A673 (cell line): ENCODE measurements at regions of chr7 and their contacts with region 1.

Region 1: DNA sequence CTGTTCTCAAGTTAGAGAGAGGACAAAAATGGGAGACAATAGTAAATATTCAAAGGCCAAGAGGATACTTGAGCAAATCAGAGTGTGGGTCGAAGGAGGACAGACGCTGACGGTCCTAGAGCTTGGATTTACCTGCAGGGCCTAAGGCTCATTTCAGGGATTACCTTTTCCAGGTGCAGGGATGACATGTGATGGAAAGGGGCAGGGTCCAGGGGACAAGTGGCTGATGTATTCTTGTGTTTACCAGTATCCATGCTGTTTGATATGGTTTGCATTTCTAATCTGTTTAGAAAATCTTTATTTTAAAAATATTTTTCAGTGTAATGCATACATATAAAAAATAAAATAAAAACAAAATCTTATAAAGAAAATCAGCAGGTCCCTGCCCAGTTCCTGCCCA is 5.3 kb downstream of the GALNTL5 start:
- DNase-seq: no peak
- H3K4me3 ChIP-seq: no peak overlapping the region
- H3K27ac ChIP-seq: no peak overlapping the region
- H3K4me1 ChIP-seq: no peaks in the 10 kb centered on the region
- H3K27me3 ChIP-seq: no peaks in the 10 kb centered on the region
- CTCF ChIP-seq: no peak

Region 2: DNA sequence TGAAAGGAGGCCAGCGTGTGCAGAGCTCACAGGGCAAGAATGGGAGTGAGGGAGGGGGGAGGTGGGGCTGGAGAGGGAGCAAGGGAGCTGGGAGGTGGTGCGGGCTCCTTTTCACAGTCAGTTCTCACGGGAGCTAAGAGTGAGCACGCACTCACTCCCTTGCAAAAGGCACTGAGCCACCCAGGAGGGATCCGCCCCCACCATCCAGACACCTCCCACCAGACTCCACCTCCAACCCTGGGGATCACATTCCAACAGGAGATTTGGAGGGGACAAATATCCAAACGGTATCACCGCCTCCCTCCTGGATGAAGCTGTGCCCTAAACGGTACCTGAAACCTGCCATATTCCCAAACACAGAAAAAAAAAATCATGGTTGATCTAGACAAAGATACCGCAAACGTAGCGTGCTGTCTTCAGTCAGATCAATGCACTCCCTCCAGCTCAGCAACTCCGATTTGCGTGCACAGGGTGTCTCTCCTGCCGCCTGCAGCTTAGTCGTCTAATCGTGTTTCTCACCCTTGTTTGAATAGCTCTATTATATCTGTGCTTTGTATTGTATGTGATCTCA is 64.3 kb before region 1 on chr7:
- CTCF ChIA-PET with region 1: no interaction called
- POLR2A ChIA-PET with region 1: interaction called, 21 read pairs
- intact Hi-C with region 1: no loop called
- DNase-seq: peak; percentile 45
- H3K4me3 ChIP-seq: peak overlapping the region; percentile 24
- H3K27ac ChIP-seq: no peak overlapping the region
- H3K4me1 ChIP-seq: no peaks in the 10 kb centered on the region
- H3K27me3 ChIP-seq: no peaks in the 10 kb centered on the region
- CTCF ChIP-seq: no peak; the same call in 1 of the 2 replicates